Endothelial cell of umbilical vein (primary cell): ENCODE measurements at regions of chr5 and their contacts with region 1.

Region 1: GRCh38 chr5:43120720-43121564 is at the start of gene ZNF131:
- DNase-seq: peak; percentile 97
- H3K4me3 ChIP-seq: peak within 1 kb of the TSS; percentile 73 to 90 (median 79)
- H3K27ac ChIP-seq: peak within 1 kb of the TSS; percentile 81
- H3K4me1 ChIP-seq: peaks cover 17% of the 10 kb centered on the region
- H3K27me3 ChIP-seq: no peaks in the 10 kb centered on the region
- CTCF ChIP-seq: no peak
- POLR2A ChIP-seq: peak; percentile 94
- total RNA-seq, gene ZNF131: 30.1 and 31.2 TPM in 2 replicates

Region 2: GRCh38 chr5:41924872-41925554 is 1195.9 kb before region 1 on chr5 and contains the start of gene FBXO4:
- CTCF ChIA-PET with region 1: no interaction called
- POLR2A ChIA-PET with region 1: no interaction called
- dilution Hi-C with region 1: no loop called
- intact Hi-C with region 1: loop called (anchors 5 kb)
- DNase-seq: peak; percentile 88
- H3K4me3 ChIP-seq: peak within 1 kb of the TSS; percentile 27 to 77 (median 66)
- H3K27ac ChIP-seq: peak within 1 kb of the TSS; percentile 92
- H3K4me1 ChIP-seq: peaks cover 22% of the 10 kb centered on the region
- H3K27me3 ChIP-seq: no peaks in the 10 kb centered on the region
- CTCF ChIP-seq: peak; percentile 50 to 74
- POLR2A ChIP-seq: peak; percentile 86
- total RNA-seq, gene FBXO4: 7.0 and 7.7 TPM in 2 replicates

Region 3: DNA sequence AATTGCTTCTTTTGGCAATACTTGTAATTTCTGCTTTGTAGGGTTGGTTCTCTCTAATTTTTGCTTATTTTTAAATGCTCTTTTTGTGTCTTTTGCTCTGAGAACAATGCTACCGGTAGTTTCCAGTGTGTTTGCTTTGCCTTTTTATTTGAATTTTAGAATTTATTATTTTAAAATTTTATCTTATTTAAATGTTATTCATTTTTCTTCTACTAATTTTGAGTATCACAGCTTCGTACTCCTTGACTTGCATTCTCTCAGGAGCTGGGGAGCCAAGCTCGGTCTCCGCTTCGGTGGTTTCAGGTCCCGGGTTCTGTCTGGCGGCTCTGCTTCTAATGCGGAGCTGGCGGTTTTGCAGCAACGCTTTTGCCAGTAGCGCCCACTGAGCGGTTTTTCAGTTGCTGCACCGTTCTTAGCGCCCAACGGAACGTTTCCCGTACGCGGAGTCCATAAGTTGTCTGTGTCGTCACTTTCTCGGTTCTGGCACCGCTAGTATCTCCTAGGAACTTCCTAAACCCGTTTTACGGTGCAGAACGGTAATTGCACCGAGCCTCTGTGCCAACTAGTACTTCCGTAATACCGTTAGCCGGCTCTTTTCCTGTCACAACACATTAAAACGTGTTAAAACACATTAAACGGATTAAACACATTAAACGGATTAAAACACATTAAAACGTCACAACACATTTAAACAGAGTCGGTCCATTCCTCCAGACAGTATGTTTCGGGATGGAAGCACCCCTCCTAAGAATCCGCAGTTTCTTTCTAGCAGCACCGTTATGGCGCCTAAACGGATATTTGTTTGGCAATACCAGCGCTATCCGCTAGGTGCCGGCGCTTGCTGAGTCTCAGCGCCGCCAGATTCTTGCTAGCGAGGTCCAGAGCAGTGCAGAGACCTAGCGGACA is 126.4 kb before region 1 on chr5:
- CTCF ChIA-PET with region 1: interaction called, 5 read pairs
- POLR2A ChIA-PET with region 1: interaction called, 6 read pairs
- dilution Hi-C with region 1: no loop called
- intact Hi-C with region 1: loop called (anchors 2 kb)
- DNase-seq: peak; percentile 96
- H3K4me3 ChIP-seq: peak overlapping the region; percentile 59 to 94 (median 61)
- H3K27ac ChIP-seq: peak overlapping the region; percentile 98
- H3K4me1 ChIP-seq: peaks cover 30% of the 10 kb centered on the region
- H3K27me3 ChIP-seq: no peaks in the 10 kb centered on the region
- CTCF ChIP-seq: peak; percentile 85 to 86
- POLR2A ChIP-seq: peak; percentile 52

Region 4: DNA sequence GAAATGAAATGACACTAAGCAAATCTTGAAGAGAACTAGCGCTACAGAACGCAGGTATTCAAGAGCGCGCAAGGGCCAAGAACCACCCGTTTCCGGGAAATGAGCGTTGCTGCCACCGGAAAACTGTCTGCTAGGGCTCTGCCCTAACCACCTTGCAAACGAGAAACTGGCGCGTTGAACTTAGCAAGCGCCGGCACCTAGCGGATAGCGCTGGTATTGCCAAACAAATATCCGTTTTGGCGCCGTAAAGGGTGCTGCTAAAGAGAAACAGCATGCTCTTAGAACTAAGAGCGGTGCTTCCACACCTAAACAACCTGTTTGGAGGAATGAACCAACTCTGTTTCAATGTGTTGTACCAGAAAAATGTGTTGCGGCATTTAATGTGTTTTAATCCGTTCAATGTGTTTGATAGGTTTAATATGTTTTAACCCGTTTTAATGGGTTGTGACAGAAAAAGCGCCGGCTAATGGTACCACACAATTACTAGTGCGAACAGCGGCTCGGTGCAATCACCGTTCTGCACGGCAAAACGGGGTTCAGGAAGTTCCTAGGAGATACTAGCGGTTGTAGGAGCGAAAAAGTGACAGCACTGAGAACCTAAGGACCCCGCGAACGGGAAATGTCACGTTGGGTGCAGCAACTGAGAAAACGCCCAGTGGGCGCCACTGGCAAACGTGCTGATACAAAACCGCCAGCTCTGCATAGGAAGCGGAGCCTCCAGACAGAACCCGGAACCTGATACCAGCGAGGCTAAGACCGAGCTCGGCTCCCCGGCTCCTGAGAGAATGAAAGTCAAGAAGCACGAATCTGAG is 80.4 kb before region 1 on chr5 and contains the start of gene ANXA2R:
- CTCF ChIA-PET with region 1: interaction called, 4 read pairs
- POLR2A ChIA-PET with region 1: interaction called, 5 read pairs
- dilution Hi-C with region 1: no loop called
- intact Hi-C with region 1: loop called (anchors 1 kb)
- DNase-seq: peak; percentile 97
- H3K4me3 ChIP-seq: peak within 1 kb of the TSS; percentile 51 to 87 (median 54)
- H3K27ac ChIP-seq: peak within 1 kb of the TSS; percentile 77
- H3K4me1 ChIP-seq: peaks cover 30% of the 10 kb centered on the region
- H3K27me3 ChIP-seq: no peaks in the 10 kb centered on the region
- CTCF ChIP-seq: peak; percentile 81 to 86
- POLR2A ChIP-seq: no peak
- total RNA-seq, gene ANXA2R: 6.6 and 8.1 TPM in 2 replicates

Region 5: DNA sequence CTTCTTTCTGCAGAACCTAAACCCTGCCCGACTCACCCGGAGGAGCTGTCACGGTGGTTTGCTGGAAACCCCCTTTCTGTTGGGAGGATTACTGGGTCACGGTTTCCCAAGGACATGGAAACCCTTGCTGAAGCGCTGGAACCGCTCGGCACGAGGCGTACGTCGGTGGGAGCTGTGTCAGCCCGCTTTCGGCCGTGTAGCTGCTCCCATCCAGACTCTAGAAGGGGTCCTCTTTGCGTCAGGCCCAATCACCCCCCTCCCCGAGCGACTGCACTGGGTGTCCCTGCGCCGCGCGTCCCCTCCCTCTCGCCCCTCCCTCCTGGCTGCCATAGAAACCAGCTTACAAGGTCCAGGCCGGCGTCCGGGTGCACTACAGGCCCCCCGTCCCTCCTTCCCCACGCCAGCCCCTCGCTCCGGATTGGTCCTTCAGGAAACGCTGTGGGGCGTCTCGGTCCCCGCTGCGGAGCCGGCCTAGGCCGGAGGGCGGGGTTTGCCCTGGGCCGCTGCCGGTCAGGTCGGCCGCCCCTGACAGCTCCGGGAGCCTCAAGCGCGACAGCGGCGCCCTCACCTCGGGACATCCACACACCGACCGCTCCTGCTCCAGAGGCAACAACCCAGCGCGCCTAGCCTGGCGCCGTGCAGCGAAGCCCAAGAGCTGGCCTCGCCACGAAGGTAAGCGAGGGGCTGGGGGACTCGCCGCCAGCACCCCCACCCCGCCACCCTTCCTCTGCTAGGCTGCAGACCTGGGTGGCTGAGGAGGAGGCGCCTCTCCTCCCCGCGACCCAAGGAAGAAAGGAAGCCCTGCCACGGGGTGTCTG is 71.0 kb after region 1 on chr5 and contains the start of gene NIM1K:
- CTCF ChIA-PET with region 1: no interaction called
- POLR2A ChIA-PET with region 1: no interaction called
- dilution Hi-C with region 1: no loop called
- intact Hi-C with region 1: no loop called
- DNase-seq: peak; percentile 23
- H3K4me3 ChIP-seq: peak within 1 kb of the TSS in 2 of 3 experiments; percentile 12 to 32
- H3K27ac ChIP-seq: no peak within 1 kb of the TSS
- H3K4me1 ChIP-seq: peaks cover 4% of the 10 kb centered on the region
- H3K27me3 ChIP-seq: peaks cover 11 to 35% of the 10 kb centered on the region in 2 experiments
- CTCF ChIP-seq: no peak
- POLR2A ChIP-seq: no peak
- total RNA-seq, gene NIM1K: 0.49 TPM in 1 of 2 replicates, not detected in the other

Region 6: DNA sequence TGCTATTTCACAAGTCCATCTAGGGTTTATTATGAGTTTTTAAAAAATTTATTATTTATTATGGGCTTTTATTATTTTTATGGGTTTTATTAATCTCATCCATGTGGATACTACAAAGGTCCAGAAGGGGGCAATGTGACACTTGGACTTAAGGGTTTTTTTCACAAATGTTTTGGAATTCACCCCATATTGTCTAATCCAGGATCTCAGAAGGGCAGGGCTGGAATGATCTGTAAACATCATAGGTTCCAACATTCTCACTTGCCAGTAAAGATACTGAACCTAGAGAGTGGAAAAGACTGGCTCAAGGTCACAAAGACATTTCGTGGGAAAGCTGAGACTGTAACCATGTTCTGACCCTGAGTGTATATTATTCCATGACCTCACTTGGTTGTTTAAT is 106.7 kb after region 1 on chr5:
- CTCF ChIA-PET with region 1: no interaction called
- POLR2A ChIA-PET with region 1: no interaction called
- dilution Hi-C with region 1: no loop called
- intact Hi-C with region 1: no loop called
- DNase-seq: peak; percentile 44
- H3K4me3 ChIP-seq: no peak overlapping the region
- H3K27ac ChIP-seq: no peak overlapping the region
- H3K4me1 ChIP-seq: no peaks in the 10 kb centered on the region
- H3K27me3 ChIP-seq: peaks cover 2% of the 10 kb centered on the region in 2 experiments
- CTCF ChIP-seq: peak; percentile 28 to 41
- POLR2A ChIP-seq: no peak

Region 7: DNA sequence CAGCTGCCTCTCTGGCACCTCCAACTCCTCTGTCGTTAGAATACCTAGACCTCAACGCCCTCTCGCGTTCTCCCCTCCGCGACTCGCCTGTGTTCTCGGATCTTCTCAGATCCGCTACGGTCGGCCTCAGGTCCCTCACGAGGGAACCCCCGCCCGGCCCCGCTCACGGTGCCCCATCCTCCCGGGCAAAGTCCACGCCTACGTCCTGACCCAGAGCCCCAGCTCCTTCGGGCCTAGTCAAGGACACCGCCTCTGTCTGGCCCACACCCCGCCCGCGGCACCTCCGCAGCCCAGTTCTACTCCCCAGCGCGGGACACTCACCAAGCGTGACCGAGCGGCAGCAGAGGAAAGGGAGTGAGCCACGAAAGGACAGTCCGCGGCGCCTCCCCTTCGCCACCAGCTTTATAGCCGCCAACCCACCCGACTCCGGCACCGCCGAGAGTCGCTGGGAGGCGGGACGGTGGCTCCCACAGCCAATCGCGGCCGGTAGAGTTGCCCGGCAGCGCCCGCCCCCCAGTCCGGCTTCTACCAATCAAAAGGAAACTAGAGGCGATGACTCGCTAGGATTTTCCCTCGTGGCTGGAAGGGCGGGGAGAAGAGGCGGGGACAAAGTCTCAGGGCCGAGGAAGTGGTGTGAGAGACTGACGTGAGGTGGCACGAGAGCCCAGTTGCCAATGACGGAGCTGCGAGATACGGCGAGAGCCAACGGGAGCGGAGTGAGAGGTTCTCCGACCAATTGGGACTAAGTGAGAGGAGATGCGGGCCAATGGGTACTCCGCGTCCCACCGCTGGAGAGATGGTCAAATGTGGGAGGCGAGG is 192.3 kb after region 1 on chr5 and contains the start of gene HMGCS1:
- CTCF ChIA-PET with region 1: interaction called, 3 read pairs
- POLR2A ChIA-PET with region 1: no interaction called
- dilution Hi-C with region 1: no loop called
- intact Hi-C with region 1: loop called (anchors 1 kb)
- DNase-seq: peak; percentile 100
- H3K4me3 ChIP-seq: peak within 1 kb of the TSS; percentile 73 to 91 (median 75)
- H3K27ac ChIP-seq: peak within 1 kb of the TSS; percentile 43
- H3K4me1 ChIP-seq: peaks cover 35% of the 10 kb centered on the region
- H3K27me3 ChIP-seq: no peaks in the 10 kb centered on the region
- CTCF ChIP-seq: peak in 1 of 2 donors; percentile 5
- POLR2A ChIP-seq: peak; percentile 57
- total RNA-seq, gene HMGCS1: 133 and 149 TPM in 2 replicates